PC-3 (cell line): ENCODE measurements at regions of chr6 and their contacts with region 1.

Region 1: GRCh38 chr6:55069132-55069781 is 105.1 kb upstream of the HCRTR2 start:
- DNase-seq: peak; percentile 83
- ATAC-seq: peak; percentile 59
- H3K4me3 ChIP-seq: no peak overlapping the region
- H3K27ac ChIP-seq: no peak overlapping the region
- H3K4me1 ChIP-seq: no peaks in the 10 kb centered on the region
- H3K27me3 ChIP-seq: no peaks in the 10 kb centered on the region
- CTCF ChIP-seq: peak; percentile 88

Region 2: GRCh38 chr6:54515013-54515412 is 554.2 kb before region 1 on chr6:
- CTCF ChIA-PET with region 1: no interaction called
- POLR2A ChIA-PET with region 1: no interaction called
- intact Hi-C with region 1: loop called (anchors 2 kb)
- DNase-seq: peak; percentile 69
- ATAC-seq: peak; percentile 88
- H3K4me3 ChIP-seq: no peak overlapping the region
- H3K27ac ChIP-seq: no peak overlapping the region
- H3K4me1 ChIP-seq: peaks cover 5% of the 10 kb centered on the region; the same call in 1 of the 2 replicates
- H3K27me3 ChIP-seq: no peaks in the 10 kb centered on the region
- CTCF ChIP-seq: peak; percentile 26; the same call in 1 of the 2 replicates

Region 3: DNA sequence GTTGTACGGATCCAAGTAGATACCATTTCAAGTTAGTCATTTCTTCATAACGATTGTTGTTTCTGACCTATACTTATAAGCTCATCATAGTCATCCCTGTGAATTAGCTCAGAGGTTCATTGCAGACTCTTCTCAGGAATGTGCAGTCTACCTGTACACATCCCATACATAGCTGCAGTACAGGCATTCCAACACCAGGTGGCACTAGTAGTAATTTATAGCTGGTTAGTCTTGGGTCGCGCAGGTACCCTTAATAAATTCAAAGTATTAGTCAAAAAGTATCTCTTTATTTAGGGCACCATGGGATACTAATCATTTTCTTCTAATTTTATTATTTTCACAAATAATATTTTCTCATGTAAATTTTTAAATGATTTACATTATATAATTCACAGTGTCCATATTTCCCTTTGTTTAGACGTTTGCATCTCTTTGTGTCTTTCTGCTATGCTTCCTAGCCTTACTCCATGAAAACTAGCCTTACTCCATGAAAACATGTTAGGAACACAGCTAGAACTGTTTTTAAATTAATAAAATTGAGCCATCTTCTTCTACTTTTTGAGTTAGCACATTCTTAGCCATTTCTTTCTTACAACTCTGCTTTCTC is 351.3 kb before region 1 on chr6:
- CTCF ChIA-PET with region 1: interaction called, 7 read pairs
- POLR2A ChIA-PET with region 1: no interaction called
- intact Hi-C with region 1: loop called (anchors 1 kb)
- DNase-seq: peak; percentile 94
- ATAC-seq: peak; percentile 87
- H3K4me3 ChIP-seq: no peak overlapping the region
- H3K27ac ChIP-seq: no peak overlapping the region
- H3K4me1 ChIP-seq: peaks cover 12% of the 10 kb centered on the region
- H3K27me3 ChIP-seq: no peaks in the 10 kb centered on the region
- CTCF ChIP-seq: peak; percentile 87

Region 4: DNA sequence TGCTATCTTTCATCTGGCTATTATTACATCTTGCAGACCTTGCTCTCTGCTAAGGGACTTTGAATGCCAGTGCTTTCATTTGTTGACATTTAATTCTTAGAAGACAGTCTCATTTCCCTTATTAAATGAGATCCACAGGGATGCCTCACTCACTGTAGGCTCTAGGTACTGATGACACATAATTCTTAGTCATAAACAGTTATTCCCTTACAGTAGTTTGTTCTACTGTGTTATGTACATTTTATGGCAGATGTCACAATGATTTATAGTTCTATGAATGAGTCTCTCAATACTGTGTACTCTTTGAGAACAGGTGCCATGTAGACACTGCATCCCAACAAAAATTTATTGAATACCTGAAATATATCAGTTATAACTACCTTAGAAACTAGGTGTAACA is 152.4 kb before region 1 on chr6:
- CTCF ChIA-PET with region 1: no interaction called
- POLR2A ChIA-PET with region 1: interaction called, 4 read pairs
- intact Hi-C with region 1: loop called (anchors 5 kb)
- DNase-seq: peak; percentile 98
- ATAC-seq: peak; percentile 100
- H3K4me3 ChIP-seq: peak overlapping the region; percentile 22; the same call in 1 of the 2 replicates
- H3K27ac ChIP-seq: peak overlapping the region; percentile 50
- H3K4me1 ChIP-seq: peaks cover 16% of the 10 kb centered on the region
- H3K27me3 ChIP-seq: no peaks in the 10 kb centered on the region
- CTCF ChIP-seq: no peak

Region 5: GRCh38 chr6:55108808-55109146 is 39.5 kb after region 1 on chr6:
- CTCF ChIA-PET with region 1: no interaction called
- POLR2A ChIA-PET with region 1: no interaction called
- intact Hi-C with region 1: no loop called
- DNase-seq: no peak
- ATAC-seq: no peak
- H3K4me3 ChIP-seq: no peak overlapping the region
- H3K27ac ChIP-seq: no peak overlapping the region
- H3K4me1 ChIP-seq: no peaks in the 10 kb centered on the region
- H3K27me3 ChIP-seq: no peaks in the 10 kb centered on the region
- CTCF ChIP-seq: no peak